GM12878 (cell line): ENCODE measurements at regions of chr11 and their contacts with region 1.

Region 1: DNA sequence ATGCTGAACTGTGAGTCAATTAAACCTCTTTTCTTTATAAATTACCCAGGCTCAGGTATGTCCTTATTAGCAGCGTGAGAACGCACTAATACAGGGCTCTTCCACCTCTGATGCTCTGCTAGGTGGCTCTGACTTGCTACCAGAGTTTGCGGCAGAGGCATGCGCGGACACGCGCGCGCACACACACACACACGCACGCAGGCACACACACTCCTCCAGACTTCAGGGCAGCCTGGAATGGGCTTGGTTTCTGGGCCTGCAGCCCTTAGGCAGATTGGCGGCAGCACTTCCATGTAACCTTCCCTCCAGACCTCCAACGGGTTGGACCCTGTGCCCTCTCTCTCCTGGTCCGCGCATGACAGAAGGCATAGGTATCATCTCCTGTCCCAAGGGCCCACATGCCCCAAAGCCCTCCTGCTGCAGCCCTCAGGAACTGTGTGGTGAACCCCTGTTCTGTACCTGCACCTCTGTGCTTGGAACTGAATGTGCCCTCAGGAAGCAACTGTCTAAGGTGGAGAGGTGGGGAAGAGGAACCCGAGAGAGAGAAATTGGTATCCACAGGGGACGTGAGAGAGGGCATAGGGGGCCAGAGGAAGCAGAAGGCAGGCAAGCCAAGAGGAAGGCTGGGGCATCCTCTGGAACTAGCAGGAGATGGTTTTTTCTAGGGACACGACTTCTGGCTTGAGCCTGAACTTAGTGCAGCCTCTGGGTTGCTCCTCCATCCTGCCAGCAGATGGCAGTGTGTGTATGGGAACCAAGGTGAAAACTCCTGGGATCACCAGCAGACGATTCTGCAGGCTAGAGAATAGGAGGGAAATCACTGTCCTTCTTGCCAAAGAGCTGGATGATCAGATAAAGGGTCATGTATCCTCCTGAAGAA is 23.4 kb upstream of the RIC3 start:
- DNase-seq: no peak
- ATAC-seq: peak; percentile 94
- H3K4me3 ChIP-seq: no peak overlapping the region
- H3K27ac ChIP-seq: no peak overlapping the region
- H3K4me1 ChIP-seq: no peaks in the 10 kb centered on the region
- H3K27me3 ChIP-seq: no peaks in the 10 kb centered on the region; a peak in 1 of 4 replicates
- CTCF ChIP-seq: peak; percentile 88 to 96 (median 90)
- EP300 ChIP-seq: no peak
- POLR2A ChIP-seq: no peak
- RAD21 ChIP-seq: peak; percentile 84

Region 2: GRCh38 chr11:8180469-8180868 is 11.8 kb before region 1 on chr11:
- CTCF ChIA-PET with region 1: interaction called, 10 read pairs
- POLR2A ChIA-PET with region 1: no interaction called
- RAD21 ChIA-PET with region 1: interaction called, 3 read pairs
- SMC1A ChIA-PET with region 1: interaction called, 5 read pairs
- in situ Hi-C with region 1: no loop called
- intact Hi-C with region 1: no loop called
- DNase-seq: no peak
- ATAC-seq: no peak
- H3K4me3 ChIP-seq: no peak overlapping the region
- H3K27ac ChIP-seq: no peak overlapping the region
- H3K4me1 ChIP-seq: no peaks in the 10 kb centered on the region
- H3K27me3 ChIP-seq: peaks cover 0 to 3% of the 10 kb centered on the region in 2 experiments; a peak in 2 of 4 replicates
- CTCF ChIP-seq: no peak
- EP300 ChIP-seq: no peak
- POLR2A ChIP-seq: no peak
- RAD21 ChIP-seq: no peak

Region 3: GRCh38 chr11:8209208-8209807 is 17.1 kb after region 1 on chr11:
- CTCF ChIA-PET with region 1: interaction called, 132 read pairs
- POLR2A ChIA-PET with region 1: interaction called, 5 read pairs
- RAD21 ChIA-PET with region 1: interaction called, 33 read pairs
- SMC1A ChIA-PET with region 1: interaction called, 28 read pairs
- in situ Hi-C with region 1: no loop called
- intact Hi-C with region 1: loop called (anchors 1 kb)
- DNase-seq: no peak
- ATAC-seq: peak; percentile 79
- H3K4me3 ChIP-seq: no peak overlapping the region
- H3K27ac ChIP-seq: no peak overlapping the region
- H3K4me1 ChIP-seq: no peaks in the 10 kb centered on the region
- H3K27me3 ChIP-seq: peaks cover 3% of the 10 kb centered on the region in 2 experiments; a peak in 3 of 4 replicates
- CTCF ChIP-seq: peak; percentile 56 to 81 (median 75)
- EP300 ChIP-seq: no peak
- POLR2A ChIP-seq: no peak
- RAD21 ChIP-seq: peak; percentile 55

Region 4: GRCh38 chr11:8219257-8220021 is 27.2 kb after region 1 on chr11:
- CTCF ChIA-PET with region 1: interaction called, 15 read pairs
- POLR2A ChIA-PET with region 1: no interaction called
- RAD21 ChIA-PET with region 1: interaction called, 5 read pairs
- SMC1A ChIA-PET with region 1: interaction called, 5 read pairs
- in situ Hi-C with region 1: no loop called
- intact Hi-C with region 1: no loop called
- DNase-seq: no peak
- ATAC-seq: peak; percentile 90
- H3K4me3 ChIP-seq: no peak overlapping the region
- H3K27ac ChIP-seq: no peak overlapping the region
- H3K4me1 ChIP-seq: no peaks in the 10 kb centered on the region; the same call in 1 of the 2 replicates
- H3K27me3 ChIP-seq: no peaks in the 10 kb centered on the region
- CTCF ChIP-seq: peak; percentile 71 to 75 (median 71)
- EP300 ChIP-seq: no peak
- POLR2A ChIP-seq: no peak
- RAD21 ChIP-seq: peak; percentile 41